PC-3 (cell line): ENCODE measurements at regions of chr6 and their contacts with region 1.

Region 1: GRCh38 chr6:15399641-15400470 is 154.0 kb downstream of the JARID2 start:
- DNase-seq: peak; percentile 69
- ATAC-seq: peak; percentile 80
- H3K4me3 ChIP-seq: peak overlapping the region; percentile 60
- H3K27ac ChIP-seq: peak overlapping the region; percentile 32; the same call in 1 of the 2 replicates
- H3K4me1 ChIP-seq: peaks cover 29% of the 10 kb centered on the region
- H3K27me3 ChIP-seq: no peaks in the 10 kb centered on the region
- CTCF ChIP-seq: no peak

Region 2: GRCh38 chr6:15370733-15371671 is 28.9 kb before region 1 on chr6:
- CTCF ChIA-PET with region 1: no interaction called
- POLR2A ChIA-PET with region 1: no interaction called
- intact Hi-C with region 1: no loop called
- DNase-seq: no peak
- ATAC-seq: no peak
- H3K4me3 ChIP-seq: no peak overlapping the region
- H3K27ac ChIP-seq: no peak overlapping the region
- H3K4me1 ChIP-seq: peaks cover 2% of the 10 kb centered on the region
- H3K27me3 ChIP-seq: no peaks in the 10 kb centered on the region
- CTCF ChIP-seq: no peak

Region 3: GRCh38 chr6:15491255-15491985 is 91.6 kb after region 1 on chr6:
- CTCF ChIA-PET with region 1: no interaction called
- POLR2A ChIA-PET with region 1: no interaction called
- intact Hi-C with region 1: loop called (anchors 10 kb)
- DNase-seq: peak; percentile 72
- ATAC-seq: peak; percentile 82
- H3K4me3 ChIP-seq: no peak overlapping the region
- H3K27ac ChIP-seq: no peak overlapping the region
- H3K4me1 ChIP-seq: no peaks in the 10 kb centered on the region
- H3K27me3 ChIP-seq: no peaks in the 10 kb centered on the region
- CTCF ChIP-seq: peak; percentile 95